Activated CD4-positive, alpha-beta memory T cell treated with anti-CD3 and anti-CD28 coated beads for 36 hours (primary cell): ENCODE measurements at regions of chr6 and their contacts with region 1.

Region 1: GRCh38 chr6:42661540-42662153 is 60.8 kb downstream of the PRPH2 start:
- DNase-seq: peak; percentile 88
- H3K4me3 Mint-ChIP-seq: no peak overlapping the region
- H3K27ac Mint-ChIP-seq: no peak overlapping the region
- H3K4me1 Mint-ChIP-seq: no peaks in the 10 kb centered on the region
- H3K27me3 Mint-ChIP-seq: no peaks in the 10 kb centered on the region

Region 2: GRCh38 chr6:42637681-42638080 is 24.0 kb before region 1 on chr6:
- CTCF ChIA-PET with region 1: interaction called, 11 read pairs
- POLR2A ChIA-PET with region 1: no interaction called
- intact Hi-C with region 1: no loop called
- DNase-seq: no peak
- H3K4me3 Mint-ChIP-seq: peak overlapping the region; percentile 0
- H3K27ac Mint-ChIP-seq: peak overlapping the region; percentile 69
- H3K4me1 Mint-ChIP-seq: peaks cover 22% of the 10 kb centered on the region
- H3K27me3 Mint-ChIP-seq: no peaks in the 10 kb centered on the region

Region 3: GRCh38 chr6:42674780-42675179 is 13.1 kb after region 1 on chr6:
- CTCF ChIA-PET with region 1: interaction called, 11 read pairs
- POLR2A ChIA-PET with region 1: no interaction called
- intact Hi-C with region 1: no loop called
- DNase-seq: no peak
- H3K4me3 Mint-ChIP-seq: no peak overlapping the region
- H3K27ac Mint-ChIP-seq: no peak overlapping the region
- H3K4me1 Mint-ChIP-seq: peaks cover 19% of the 10 kb centered on the region
- H3K27me3 Mint-ChIP-seq: no peaks in the 10 kb centered on the region

Region 4: DNA sequence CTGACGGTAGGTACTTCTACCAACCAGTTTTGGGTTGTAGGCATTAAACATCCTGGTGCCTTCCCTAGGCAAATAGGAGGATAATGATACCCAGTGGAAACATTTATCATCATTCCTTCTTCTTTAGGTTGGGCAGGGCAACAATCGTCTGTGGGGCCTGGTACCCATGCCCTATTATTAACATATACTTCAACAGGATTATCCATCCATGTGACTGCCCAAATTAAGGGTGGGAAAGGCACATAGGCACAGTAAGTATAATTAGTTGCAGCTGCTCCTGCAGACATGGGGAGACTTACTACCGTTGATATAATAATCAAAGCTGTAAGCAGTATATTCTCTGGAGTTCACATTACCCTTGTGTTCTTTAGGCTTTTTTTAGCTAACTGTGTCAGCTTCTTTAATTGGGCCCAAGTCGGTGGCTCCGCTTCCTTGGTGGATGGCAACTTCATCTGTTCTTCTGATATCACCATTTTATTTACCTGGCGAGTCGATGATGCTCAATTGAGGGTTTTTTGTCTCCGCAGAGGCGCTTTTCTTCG is 234.6 kb after region 1 on chr6:
- CTCF ChIA-PET with region 1: interaction called, 18 read pairs
- POLR2A ChIA-PET with region 1: no interaction called
- intact Hi-C with region 1: loop called (anchors 1 kb)
- DNase-seq: no peak
- H3K4me3 Mint-ChIP-seq: no peak overlapping the region
- H3K27ac Mint-ChIP-seq: no peak overlapping the region
- H3K4me1 Mint-ChIP-seq: peaks cover 1% of the 10 kb centered on the region
- H3K27me3 Mint-ChIP-seq: no peaks in the 10 kb centered on the region

Region 5: DNA sequence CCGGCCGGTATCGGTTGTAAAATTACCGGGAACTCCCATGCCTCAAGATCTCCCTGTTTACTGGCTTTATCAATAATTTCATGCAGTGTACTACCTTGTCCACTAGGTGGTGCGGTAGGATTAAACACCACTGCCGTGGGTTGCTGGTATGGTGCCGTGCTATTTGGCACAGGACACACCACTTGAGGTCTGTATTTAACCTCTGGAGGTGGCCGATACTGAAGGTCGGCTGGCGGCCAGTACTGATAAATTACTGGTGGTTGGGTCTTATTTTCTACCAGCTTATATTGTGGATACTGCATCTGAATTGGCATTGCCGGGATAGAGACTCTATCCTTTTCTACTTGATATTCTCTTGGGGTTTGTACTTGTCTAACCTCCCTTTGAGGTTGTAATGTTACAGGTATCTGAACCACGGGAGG is 239.9 kb after region 1 on chr6:
- CTCF ChIA-PET with region 1: interaction called, 18 read pairs
- POLR2A ChIA-PET with region 1: no interaction called
- intact Hi-C with region 1: loop called (anchors 1 kb)
- DNase-seq: peak; percentile 78
- H3K4me3 Mint-ChIP-seq: no peak overlapping the region
- H3K27ac Mint-ChIP-seq: no peak overlapping the region
- H3K4me1 Mint-ChIP-seq: peaks cover 8% of the 10 kb centered on the region
- H3K27me3 Mint-ChIP-seq: no peaks in the 10 kb centered on the region